Dendritic cell treated with granulocyte-macrophage colony-stimulating factor and Interleukin-4, amounts not matched to agents 40 ng/mL and 50 ng/mL, for 4 days (primary cell): ENCODE measurements at regions of chr1 and their contacts with region 1.

Region 1: GRCh38 chr1:44499306-44499705 is 94.3 kb downstream of the RNF220 start:
- H3K4me3 Mint-ChIP-seq: no peak overlapping the region
- H3K27ac Mint-ChIP-seq: no peak overlapping the region
- H3K4me1 Mint-ChIP-seq: peaks cover 5% of the 10 kb centered on the region
- H3K27me3 Mint-ChIP-seq: peaks cover 4% of the 10 kb centered on the region

Region 2: GRCh38 chr1:44417351-44418021 is 81.8 kb before region 1 on chr1:
- intact Hi-C with region 1: loop called (anchors 5 kb)
- H3K4me3 Mint-ChIP-seq: peak overlapping the region; percentile 69
- H3K27ac Mint-ChIP-seq: no peak overlapping the region
- H3K4me1 Mint-ChIP-seq: peaks cover 14% of the 10 kb centered on the region
- H3K27me3 Mint-ChIP-seq: peaks cover 33% of the 10 kb centered on the region

Region 3: GRCh38 chr1:44652445-44653106 is 153.3 kb after region 1 on chr1:
- intact Hi-C with region 1: no loop called
- H3K4me3 Mint-ChIP-seq: no peak overlapping the region
- H3K27ac Mint-ChIP-seq: no peak overlapping the region
- H3K4me1 Mint-ChIP-seq: no peaks in the 10 kb centered on the region
- H3K27me3 Mint-ChIP-seq: no peaks in the 10 kb centered on the region

Region 4: DNA sequence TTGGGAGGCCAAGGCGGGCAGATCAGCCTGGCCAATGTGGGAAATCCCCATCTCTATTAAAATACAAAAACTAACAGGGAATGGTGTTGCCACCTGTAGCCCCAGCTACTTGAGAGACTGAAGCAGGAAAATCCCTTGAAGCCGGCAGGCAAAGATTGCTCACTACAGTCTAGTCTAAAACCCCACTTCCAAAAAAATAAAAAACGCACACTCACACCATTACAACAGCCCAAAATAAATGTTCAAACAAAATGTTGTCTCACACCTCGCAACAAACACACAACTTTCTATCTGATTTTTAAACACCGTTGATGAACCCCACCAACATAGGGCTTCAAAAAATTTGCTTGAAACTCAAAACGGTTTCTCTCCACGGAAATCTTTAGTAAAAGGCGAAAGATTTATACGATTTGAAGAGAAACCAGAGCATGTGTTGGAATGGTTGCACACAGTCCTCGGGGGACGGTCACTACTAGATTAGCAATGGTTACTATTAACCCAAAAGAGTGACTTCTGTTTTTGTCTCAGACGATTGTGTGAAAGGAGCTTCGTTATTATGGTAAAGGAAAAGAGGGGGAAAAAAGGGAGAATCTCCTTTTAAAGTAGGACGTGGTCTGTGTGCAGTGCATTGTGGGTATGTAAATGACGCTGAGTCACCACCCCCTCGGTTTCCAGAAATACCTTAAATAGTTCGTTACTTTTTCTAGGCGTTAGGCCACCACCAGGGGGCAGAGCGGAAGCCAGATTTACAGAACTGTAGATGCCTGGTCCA is 231.6 kb after region 1 on chr1 and contains the start of gene RNU5D-1:
- intact Hi-C with region 1: no loop called
- H3K4me3 Mint-ChIP-seq: peak within 1 kb of the TSS; percentile 65
- H3K27ac Mint-ChIP-seq: peak within 1 kb of the TSS; percentile 96
- H3K4me1 Mint-ChIP-seq: peaks cover 40% of the 10 kb centered on the region
- H3K27me3 Mint-ChIP-seq: no peaks in the 10 kb centered on the region